ENCODE measurements at regions of chr19 and their contacts with region 1.

Region 1: DNA sequence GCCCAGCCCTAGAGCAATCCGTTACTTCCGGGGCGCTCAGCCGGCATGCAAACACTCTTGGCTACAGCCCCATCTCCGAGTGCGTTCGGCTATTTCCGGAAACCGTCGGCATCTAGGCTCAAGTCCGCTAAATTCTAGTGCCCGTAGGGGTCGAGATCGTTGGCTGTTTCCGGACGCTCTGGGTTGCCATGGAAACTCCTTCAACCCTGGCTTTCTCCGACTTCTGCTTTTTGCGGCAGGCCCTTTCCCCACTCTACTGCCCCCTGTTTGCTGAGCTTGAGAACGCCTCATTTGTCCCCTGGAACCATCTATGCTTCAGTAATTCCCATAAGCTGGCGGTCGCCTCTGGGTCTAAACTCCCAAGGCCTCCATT is 533 bp upstream of the PIK3R2 start:
- DNase-seq: peak; percentile 88 to 93
- ATAC-seq: peak; percentile 63 to 73
- H3K4me3 ChIP-seq: peak overlapping the region; percentile 68 to 86 (median 81)
- H3K27ac ChIP-seq: peak overlapping the region; percentile 97 to 100 (median 98)
- H3K4me1 ChIP-seq: peaks cover 34 to 42% of the 10 kb centered on the region in 2 donors
- H3K27me3 ChIP-seq: no peaks in the 10 kb centered on the region
- CTCF ChIP-seq: peak; percentile 42 to 70 (median 56)
- POLR2A ChIP-seq: no peak

Region 2: DNA sequence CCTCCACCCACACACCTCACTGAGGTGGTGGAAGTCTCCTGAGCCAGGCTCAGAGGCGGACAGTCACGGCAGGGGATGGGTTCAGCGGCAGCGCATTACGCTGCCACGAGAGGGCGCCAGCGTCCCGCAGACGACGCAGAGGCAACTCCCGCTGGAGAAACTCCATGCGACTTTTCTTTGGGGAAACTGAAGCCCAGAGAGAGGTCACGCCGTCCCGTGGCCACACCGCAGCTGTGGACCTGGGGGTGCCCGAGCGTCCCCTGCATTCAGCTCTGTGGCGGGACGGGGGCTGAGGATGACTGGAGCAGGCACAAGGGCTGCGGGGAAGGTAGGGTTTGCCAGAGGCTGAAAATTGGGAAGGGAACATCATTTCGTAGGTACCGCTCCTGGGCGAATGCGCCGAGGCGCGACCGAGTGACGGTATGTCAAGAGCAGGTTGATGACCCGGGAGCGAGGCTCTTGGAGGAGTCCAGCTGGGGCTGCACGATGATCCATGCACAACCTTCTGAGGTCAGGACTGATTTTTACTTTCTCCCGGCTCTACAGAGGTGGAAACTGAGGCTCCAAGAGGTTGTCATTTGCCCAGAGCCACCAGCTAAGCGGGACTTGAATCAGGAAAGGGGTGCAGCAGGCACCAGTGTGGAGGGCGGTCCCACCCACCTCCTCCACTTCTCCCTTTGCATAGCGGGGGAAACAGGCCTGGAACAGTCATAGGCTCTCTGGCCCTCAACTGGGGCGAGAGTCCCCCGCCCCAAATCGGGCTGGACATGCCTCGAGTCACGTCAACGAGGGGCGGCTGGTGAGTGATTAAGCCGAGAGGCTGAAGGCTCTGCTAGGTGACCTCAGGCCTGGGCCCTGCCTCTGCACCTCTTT is 145.2 kb before region 1 on chr19:
- in situ Hi-C with region 1: no loop called
- intact Hi-C with region 1: loop called (anchors 10 kb)
- DNase-seq: peak; percentile 81 to 84
- ATAC-seq: peak; percentile 61 to 74
- H3K4me3 ChIP-seq: peak overlapping the region; percentile 74 to 99 (median 83)
- H3K27ac ChIP-seq: peak overlapping the region; percentile 89 to 100 (median 95)
- H3K4me1 ChIP-seq: peaks cover under 1 to 12% of the 10 kb centered on the region in 2 donors
- H3K27me3 ChIP-seq: peaks cover 0 to 2% (median 0%) of the 10 kb centered on the region in 3 donors
- CTCF ChIP-seq: peak; percentile 97 to 100 (median 99)
- POLR2A ChIP-seq: peak; percentile 76 to 90

Region 3: GRCh38 chr19:18224525-18225354 is 72.3 kb after region 1 on chr19:
- in situ Hi-C with region 1: no loop called
- intact Hi-C with region 1: loop called (anchors 1 kb)
- DNase-seq: peak; percentile 97 to 98
- ATAC-seq: peak; percentile 93
- H3K4me3 ChIP-seq: peak overlapping the region; percentile 52 to 71 (median 62)
- H3K27ac ChIP-seq: peak overlapping the region; percentile 72 to 82 (median 76)
- H3K4me1 ChIP-seq: peaks cover 17 to 24% of the 10 kb centered on the region in 2 donors
- H3K27me3 ChIP-seq: peaks cover 0 to 6% (median 0%) of the 10 kb centered on the region in 3 donors
- CTCF ChIP-seq: no peak
- POLR2A ChIP-seq: no peak